Colonic mucosa (tissue), 4 donors: ENCODE measurements at regions of chr6 and their contacts with region 1.

Region 1: DNA sequence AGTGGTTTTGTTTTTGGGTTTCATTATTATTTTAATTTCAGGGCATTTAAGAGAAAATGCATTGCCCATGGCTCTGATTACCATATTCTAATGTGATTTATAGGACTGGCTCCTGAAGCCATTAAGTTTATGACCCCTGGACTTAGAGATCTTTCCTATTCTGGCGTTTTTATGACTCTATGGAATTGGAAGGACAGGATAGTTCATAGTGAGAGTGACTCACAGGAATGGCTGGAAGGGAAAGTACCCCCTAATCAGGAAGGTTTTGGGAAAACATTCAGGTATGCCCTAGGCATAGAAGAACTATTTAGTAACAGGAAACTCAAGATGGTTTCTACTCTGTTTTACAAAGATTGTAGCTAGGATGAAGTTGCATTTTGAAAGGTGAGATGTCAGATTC is 108.6 kb upstream of the SLC2A12 start:
- DNase-seq: no peak
- H3K4me3 ChIP-seq: no peak overlapping the region
- H3K27ac ChIP-seq: no peak overlapping the region
- H3K4me1 ChIP-seq: no peaks in the 10 kb centered on the region
- H3K27me3 ChIP-seq: no peaks in the 10 kb centered on the region
- CTCF ChIP-seq: no peak

Region 2: DNA sequence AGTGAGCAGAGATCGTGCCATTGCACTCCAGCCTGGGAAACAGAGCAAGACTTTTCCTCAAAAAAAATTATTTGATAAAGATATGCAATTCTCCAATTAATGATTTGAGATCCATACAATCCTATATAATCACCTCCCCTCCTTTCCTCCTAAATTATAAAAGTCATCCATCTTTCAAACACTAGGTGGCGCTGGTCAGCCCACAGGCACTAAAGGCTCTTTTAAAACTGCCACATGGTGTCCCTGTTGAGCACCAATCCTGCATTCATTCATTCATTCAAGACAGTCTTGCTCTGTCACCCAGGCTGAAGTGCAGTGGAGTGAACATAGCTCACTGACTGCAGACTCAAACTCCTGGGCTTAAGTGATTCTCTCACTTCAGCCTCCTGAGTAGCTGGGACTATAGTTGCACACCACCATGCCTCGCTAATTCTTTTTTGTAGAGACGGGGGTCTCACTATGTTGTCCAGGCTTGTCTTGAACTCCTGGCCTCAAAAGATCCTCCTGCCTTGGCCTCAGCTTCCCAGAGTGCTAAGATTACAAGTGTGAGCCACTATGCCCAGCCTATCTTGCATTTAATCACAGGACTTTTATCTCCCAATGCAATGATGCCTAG is 49.9 kb before region 1 on chr6:
- intact Hi-C with region 1: no loop called
- DNase-seq: peak; percentile 43
- H3K4me3 ChIP-seq: no peak overlapping the region
- H3K27ac ChIP-seq: no peak overlapping the region
- H3K4me1 ChIP-seq: no peaks in the 10 kb centered on the region
- H3K27me3 ChIP-seq: no peaks in the 10 kb centered on the region
- CTCF ChIP-seq: peak; percentile 86

Region 3: DNA sequence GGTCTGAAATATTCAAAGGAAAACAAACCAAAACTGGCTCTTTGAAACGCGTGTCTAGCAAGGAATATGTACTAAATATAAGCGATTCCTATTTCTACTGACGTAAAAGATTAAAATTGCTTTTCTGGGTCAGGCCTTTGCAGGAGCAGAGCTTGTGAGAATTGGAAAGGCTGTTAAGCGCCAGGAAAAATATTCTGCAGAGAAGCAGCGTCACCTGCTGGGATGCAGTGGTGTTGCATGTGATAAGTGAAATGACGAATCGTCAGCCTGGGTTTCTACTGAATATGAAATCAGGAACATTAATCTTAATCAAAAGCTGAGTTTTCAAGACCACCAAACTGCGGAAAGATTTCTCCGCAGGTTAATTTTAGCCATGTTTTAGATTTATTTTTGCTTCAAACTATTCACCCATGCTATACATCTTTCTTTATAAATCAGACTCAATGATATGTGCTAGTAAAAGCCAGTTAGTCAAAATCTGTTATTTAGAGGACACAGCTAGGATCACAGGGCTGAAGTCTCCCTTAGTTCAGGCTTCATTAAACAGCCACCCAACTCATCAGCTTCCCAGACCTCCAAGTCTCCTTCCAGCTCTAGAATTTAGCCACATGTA is 721.5 kb after region 1 on chr6:
- intact Hi-C with region 1: loop called (anchors 5 kb)
- DNase-seq: peak; percentile 41
- H3K4me3 ChIP-seq: no peak overlapping the region
- H3K27ac ChIP-seq: no peak overlapping the region
- H3K4me1 ChIP-seq: no peaks in the 10 kb centered on the region
- H3K27me3 ChIP-seq: no peaks in the 10 kb centered on the region
- CTCF ChIP-seq: peak; percentile 97

Region 4: DNA sequence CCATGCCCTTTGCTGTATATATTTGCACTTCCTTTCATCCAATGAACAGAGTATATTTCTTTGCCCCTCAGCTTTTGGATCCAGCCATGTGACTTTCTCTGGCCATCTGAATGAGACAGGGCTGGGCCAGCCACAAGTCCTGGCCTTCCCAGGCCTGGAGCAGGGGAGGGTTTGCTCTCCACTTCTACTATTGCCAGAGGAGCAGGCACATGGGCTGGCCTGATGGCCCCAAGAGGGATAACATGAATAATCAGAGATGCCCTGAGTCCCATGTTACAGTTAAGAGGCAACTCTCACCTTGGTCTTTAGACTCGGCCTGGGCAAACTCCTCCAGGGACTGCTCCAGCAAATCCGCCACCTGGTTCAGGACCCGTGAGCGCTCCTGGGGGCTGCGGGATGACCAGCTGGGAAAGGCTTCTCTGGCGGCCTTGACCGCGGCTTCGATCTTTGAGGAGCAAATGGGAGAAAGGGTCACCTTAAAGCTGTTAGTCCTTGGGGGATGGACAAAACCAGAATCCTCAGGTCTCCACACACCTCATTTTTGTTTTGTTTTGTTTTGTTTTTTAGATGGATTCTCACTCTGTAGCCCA is 782.6 kb after region 1 on chr6:
- intact Hi-C with region 1: loop called (anchors 5 kb)
- DNase-seq: no peak
- H3K4me3 ChIP-seq: no peak overlapping the region
- H3K27ac ChIP-seq: no peak overlapping the region
- H3K4me1 ChIP-seq: no peaks in the 10 kb centered on the region
- H3K27me3 ChIP-seq: no peaks in the 10 kb centered on the region
- CTCF ChIP-seq: no peak